Activated CD4-positive, alpha-beta T cell treated with anti-CD3 and anti-CD28 coated beads, Interleukin-2, amount 10 ng/mL, durations not matched to agents 24 days and 14 days (primary cell): ENCODE measurements at regions of chr4 and their contacts with region 1.

Region 1: GRCh38 chr4:39638354-39639240 is at the start of gene SMIM14:
- DNase-seq: peak; percentile 97
- H3K4me3 Mint-ChIP-seq: peak within 1 kb of the TSS; percentile 90
- H3K27ac Mint-ChIP-seq: peak within 1 kb of the TSS; percentile 69
- H3K4me1 Mint-ChIP-seq: peaks cover 31% of the 10 kb centered on the region
- H3K27me3 Mint-ChIP-seq: peaks cover 31% of the 10 kb centered on the region
- total RNA-seq, gene SMIM14: 1.0 and 2.0 TPM in 2 replicates

Region 2: GRCh38 chr4:39181905-39182638 is 456.5 kb before region 1 on chr4 and contains the start of gene WDR19:
- intact Hi-C with region 1: loop called (anchors 5 kb)
- DNase-seq: peak; percentile 100
- H3K4me3 Mint-ChIP-seq: no peak within 1 kb of the TSS
- H3K27ac Mint-ChIP-seq: no peak within 1 kb of the TSS
- H3K4me1 Mint-ChIP-seq: peaks cover 7% of the 10 kb centered on the region
- H3K27me3 Mint-ChIP-seq: peaks cover 6% of the 10 kb centered on the region
- total RNA-seq, gene WDR19: 12.1 and 15.6 TPM in 2 replicates

Region 3: GRCh38 chr4:39527273-39528060 is 111.1 kb before region 1 on chr4 and contains the start of gene UGDH:
- intact Hi-C with region 1: loop called (anchors 2 kb)
- DNase-seq: peak; percentile 99
- H3K4me3 Mint-ChIP-seq: peak within 1 kb of the TSS; percentile 98
- H3K27ac Mint-ChIP-seq: peak within 1 kb of the TSS; percentile 95
- H3K4me1 Mint-ChIP-seq: peaks cover 20% of the 10 kb centered on the region
- H3K27me3 Mint-ChIP-seq: no peaks in the 10 kb centered on the region
- total RNA-seq, gene UGDH: 23.1 and 29.2 TPM in 2 replicates